Pancreas (tissue), 10 donors: ENCODE measurements at regions of chr12 and their contacts with region 1.

Region 1: DNA sequence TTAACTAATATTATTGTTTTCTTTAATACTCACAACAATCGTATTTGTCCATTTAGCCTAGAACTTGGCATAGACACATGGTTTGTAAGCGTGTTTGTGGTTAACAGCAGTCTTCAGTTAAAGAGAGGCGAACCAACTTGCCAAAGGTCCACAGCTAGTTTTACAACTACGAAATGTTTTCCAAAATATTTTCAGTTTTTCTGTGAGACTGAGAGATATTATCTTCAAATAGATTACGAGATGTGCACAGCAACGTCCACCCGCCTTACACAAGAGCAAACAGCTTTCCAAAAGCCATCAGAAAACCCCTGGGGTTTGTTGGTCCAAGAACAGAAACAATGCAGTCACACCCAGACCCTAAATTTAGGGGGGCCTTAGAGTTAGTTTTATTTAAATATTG is 58.6 kb upstream of the RASSF3 start:
- DNase-seq: no peak
- ATAC-seq: no peak
- H3K4me3 ChIP-seq: no peak overlapping the region
- H3K27ac ChIP-seq: no peak overlapping the region
- H3K4me1 ChIP-seq: no peaks in the 10 kb centered on the region
- H3K27me3 ChIP-seq: no peaks in the 10 kb centered on the region
- CTCF ChIP-seq: no peak

Region 2: DNA sequence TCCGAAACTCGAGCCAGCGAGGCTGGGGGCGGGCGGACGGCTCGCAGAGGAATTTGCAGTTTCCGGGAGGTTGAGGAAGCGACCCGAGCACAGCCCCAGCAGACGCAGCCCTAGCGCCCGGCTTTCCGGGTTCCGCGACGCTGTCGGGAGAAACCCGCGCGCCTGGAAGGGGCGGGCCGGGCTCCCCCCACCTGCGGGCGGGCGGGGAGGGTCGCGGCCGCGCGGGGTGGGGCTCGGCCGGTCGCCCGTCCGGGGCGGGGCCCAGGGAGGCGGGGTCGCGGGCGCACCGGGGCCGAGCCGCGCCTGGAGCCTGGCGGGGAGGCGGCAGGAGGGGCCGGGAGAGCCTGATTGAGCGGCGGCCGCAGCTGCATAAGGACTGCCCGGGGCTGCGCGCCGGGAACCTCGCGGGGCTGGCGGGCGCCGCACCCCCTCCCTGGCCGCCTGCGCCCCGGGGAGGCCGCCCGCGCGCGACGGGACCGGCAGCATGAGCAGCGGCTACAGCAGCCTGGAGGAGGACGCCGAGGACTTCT is 58.5 kb after region 1 on chr12 and contains the start of gene RASSF3:
- intact Hi-C with region 1: no loop called
- DNase-seq: peak; percentile 65 to 89 (median 81)
- ATAC-seq: peak; percentile 77 to 87 (median 79)
- H3K4me3 ChIP-seq: peak within 1 kb of the TSS; percentile 86 to 96 (median 90)
- H3K27ac ChIP-seq: peak within 1 kb of the TSS; percentile 77 to 93 (median 82)
- H3K4me1 ChIP-seq: peaks cover 0 to 8% (median 0%) of the 10 kb centered on the region in 3 donors
- H3K27me3 ChIP-seq: no peaks in the 10 kb centered on the region
- CTCF ChIP-seq: no peak
- total RNA-seq, gene RASSF3: 13.7 to 36.5 (median 22.6) TPM

Region 3: DNA sequence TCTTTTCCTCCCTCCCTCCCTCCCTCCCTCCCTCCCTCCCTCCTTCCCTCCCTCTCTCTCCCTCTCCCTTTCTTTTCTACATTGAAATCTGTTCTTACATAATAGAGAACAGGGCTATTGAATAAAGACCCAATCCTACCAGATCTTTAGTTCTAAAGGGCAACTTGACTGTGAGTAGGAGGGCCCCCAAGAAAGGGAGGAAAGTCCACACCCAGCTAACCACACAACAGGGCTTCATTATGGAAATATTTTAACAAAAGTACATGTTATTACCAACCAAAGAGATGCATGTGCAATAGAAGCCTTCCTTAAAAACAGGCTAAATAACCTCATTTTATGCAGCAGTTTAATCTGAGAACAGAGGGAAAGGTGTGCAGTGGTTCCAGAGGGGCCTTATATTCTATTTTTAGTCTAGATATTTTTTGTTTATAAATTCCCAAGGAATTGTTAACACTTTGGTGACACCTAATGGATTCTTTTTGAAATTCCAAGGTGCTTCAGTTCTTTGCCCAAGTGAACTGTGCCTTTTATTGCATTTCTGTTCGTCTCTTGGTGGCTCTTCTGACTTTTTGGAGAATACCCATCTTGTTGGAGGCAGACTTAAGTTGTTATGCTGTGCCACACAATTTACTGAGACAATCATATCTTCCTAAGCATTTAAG is 144.5 kb after region 1 on chr12:
- intact Hi-C with region 1: loop called (anchors 5 kb)
- DNase-seq: no peak
- ATAC-seq: peak in 3 of 4 donors; percentile 29 to 51 (median 31)
- H3K4me3 ChIP-seq: no peak overlapping the region
- H3K27ac ChIP-seq: no peak overlapping the region
- H3K4me1 ChIP-seq: no peaks in the 10 kb centered on the region
- H3K27me3 ChIP-seq: no peaks in the 10 kb centered on the region
- CTCF ChIP-seq: no peak